ENCODE measurements at regions of chr18 and their contacts with region 1.

Region 1: DNA sequence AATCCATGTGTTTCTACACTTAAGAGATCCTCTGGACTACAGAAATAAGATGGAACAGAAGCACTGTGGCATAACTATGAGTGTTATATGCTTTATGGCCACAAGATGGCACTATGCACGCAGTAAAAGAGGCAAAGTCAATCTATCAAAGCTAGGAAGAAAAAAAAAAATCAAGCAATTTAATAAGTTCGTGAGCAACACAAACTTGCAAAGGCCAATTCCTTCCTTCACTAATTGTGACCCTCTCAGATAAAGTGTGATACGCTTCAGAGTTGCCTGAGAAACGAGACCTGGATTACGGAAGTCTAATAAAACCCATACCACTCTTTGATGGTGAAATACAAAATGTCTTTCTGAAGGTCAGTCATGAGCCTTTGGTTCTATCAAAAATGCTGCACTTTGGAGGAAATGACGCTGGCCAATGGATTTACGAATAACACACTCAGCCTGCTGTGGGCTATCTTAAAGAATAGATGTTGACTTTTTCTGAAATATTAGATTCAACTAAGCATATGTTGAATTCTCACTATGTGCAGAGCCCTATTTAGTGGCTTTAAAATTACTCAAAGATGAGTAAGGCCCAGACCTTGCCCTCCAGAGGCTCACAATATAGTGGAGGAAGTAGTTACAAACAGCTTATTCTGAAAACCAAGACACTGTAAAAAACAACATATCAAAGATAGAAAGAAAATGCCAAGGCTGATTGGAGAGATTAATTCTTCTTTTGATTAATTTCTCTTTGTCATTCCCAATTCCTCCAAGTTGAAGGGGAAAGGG is 35.5 kb upstream of the TTR start:
- DNase-seq: peak; percentile 82
- H3K4me3 ChIP-seq: no peak overlapping the region
- H3K27ac ChIP-seq: no peak overlapping the region
- H3K4me1 ChIP-seq: peaks cover 3% of the 10 kb centered on the region
- H3K27me3 ChIP-seq: no peaks in the 10 kb centered on the region
- CTCF ChIP-seq: peak; percentile 49 to 65
- POLR2A ChIP-seq: no peak

Region 2: GRCh38 chr18:30971338-30971956 is 584.7 kb before region 1 on chr18:
- CTCF ChIA-PET with region 1: no interaction called
- POLR2A ChIA-PET with region 1: no interaction called
- dilution Hi-C with region 1: no loop called
- intact Hi-C with region 1: loop called (anchors 5 kb)
- DNase-seq: peak; percentile 37
- H3K4me3 ChIP-seq: no peak overlapping the region
- H3K27ac ChIP-seq: no peak overlapping the region
- H3K4me1 ChIP-seq: no peaks in the 10 kb centered on the region
- H3K27me3 ChIP-seq: no peaks in the 10 kb centered on the region
- CTCF ChIP-seq: peak in 1 of 2 donors; percentile 31
- POLR2A ChIP-seq: no peak

Region 3: DNA sequence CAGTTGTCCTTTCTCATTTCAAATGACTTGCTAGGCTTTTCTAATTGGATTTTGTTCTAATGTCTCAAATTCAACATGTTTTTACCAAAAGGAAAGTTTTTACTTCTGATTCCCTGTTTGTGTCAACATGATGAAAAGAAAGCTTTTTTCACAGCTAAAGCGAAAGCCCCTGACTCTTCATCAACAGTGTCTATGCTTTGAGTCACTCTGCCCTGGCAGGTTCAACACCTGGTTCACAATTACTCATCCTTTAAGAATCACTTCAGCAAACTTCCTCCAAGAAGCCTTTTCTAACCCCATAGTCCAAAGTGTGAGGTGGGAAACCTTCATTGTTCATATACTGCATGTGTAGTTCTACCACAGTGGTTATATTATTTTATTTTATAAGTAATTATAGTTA is 65.8 kb before region 1 on chr18:
- CTCF ChIA-PET with region 1: no interaction called
- POLR2A ChIA-PET with region 1: no interaction called
- dilution Hi-C with region 1: no loop called
- intact Hi-C with region 1: no loop called
- DNase-seq: no peak
- H3K4me3 ChIP-seq: no peak overlapping the region
- H3K27ac ChIP-seq: no peak overlapping the region
- H3K4me1 ChIP-seq: no peaks in the 10 kb centered on the region
- H3K27me3 ChIP-seq: no peaks in the 10 kb centered on the region
- CTCF ChIP-seq: no peak
- POLR2A ChIP-seq: no peak

Region 4: GRCh38 chr18:31685097-31686082 is 129.2 kb after region 1 on chr18:
- CTCF ChIA-PET with region 1: interaction called, 10 read pairs
- POLR2A ChIA-PET with region 1: no interaction called
- dilution Hi-C with region 1: no loop called
- intact Hi-C with region 1: loop called (anchors 1 kb)
- DNase-seq: peak; percentile 83
- H3K4me3 ChIP-seq: peak overlapping the region; percentile 52 to 68 (median 59)
- H3K27ac ChIP-seq: peak overlapping the region; percentile 39
- H3K4me1 ChIP-seq: peaks cover 31% of the 10 kb centered on the region
- H3K27me3 ChIP-seq: no peaks in the 10 kb centered on the region
- CTCF ChIP-seq: peak; percentile 35 to 50
- POLR2A ChIP-seq: peak; percentile 48

Region 5: DNA sequence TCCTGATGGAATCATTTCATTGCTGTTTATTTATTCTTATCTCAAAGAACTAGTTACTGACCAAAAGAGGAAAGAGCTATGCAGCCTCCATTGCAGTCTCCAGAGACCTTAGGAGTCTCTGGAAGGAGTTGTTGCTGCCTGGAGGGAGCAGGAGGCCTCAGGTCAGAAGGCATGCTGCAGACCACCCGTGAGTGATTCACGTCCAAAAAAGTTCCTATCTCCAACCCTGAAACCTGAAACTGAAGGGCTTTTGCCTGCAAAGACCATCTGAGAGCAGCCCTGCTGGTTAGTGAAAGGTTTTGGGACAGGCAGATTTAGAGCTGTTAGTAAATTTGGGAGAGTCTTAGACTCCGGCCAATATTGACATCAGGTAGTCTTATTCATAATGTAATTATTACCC is 175.5 kb after region 1 on chr18:
- CTCF ChIA-PET with region 1: interaction called, 148 read pairs
- POLR2A ChIA-PET with region 1: no interaction called
- dilution Hi-C with region 1: no loop called
- intact Hi-C with region 1: no loop called
- DNase-seq: no peak
- H3K4me3 ChIP-seq: no peak overlapping the region
- H3K27ac ChIP-seq: no peak overlapping the region
- H3K4me1 ChIP-seq: no peaks in the 10 kb centered on the region
- H3K27me3 ChIP-seq: peaks cover 9 to 13% of the 10 kb centered on the region in 2 experiments
- CTCF ChIP-seq: no peak
- POLR2A ChIP-seq: no peak

Region 6: GRCh38 chr18:31819106-31819924 is 263.2 kb after region 1 on chr18:
- CTCF ChIA-PET with region 1: interaction called, 42 read pairs
- POLR2A ChIA-PET with region 1: no interaction called
- dilution Hi-C with region 1: no loop called
- intact Hi-C with region 1: loop called (anchors 1 kb)
- DNase-seq: peak; percentile 52
- H3K4me3 ChIP-seq: no peak overlapping the region
- H3K27ac ChIP-seq: no peak overlapping the region
- H3K4me1 ChIP-seq: no peaks in the 10 kb centered on the region
- H3K27me3 ChIP-seq: peaks cover 4 to 7% of the 10 kb centered on the region in 2 experiments
- CTCF ChIP-seq: peak; percentile 51 to 64
- POLR2A ChIP-seq: no peak

Region 7: GRCh38 chr18:32446780-32447179 is 890.6 kb after region 1 on chr18:
- CTCF ChIA-PET with region 1: no interaction called
- POLR2A ChIA-PET with region 1: no interaction called
- dilution Hi-C with region 1: no loop called
- intact Hi-C with region 1: no loop called
- DNase-seq: no peak
- H3K4me3 ChIP-seq: no peak overlapping the region
- H3K27ac ChIP-seq: no peak overlapping the region
- H3K4me1 ChIP-seq: no peaks in the 10 kb centered on the region
- H3K27me3 ChIP-seq: peaks cover 0 to 2% of the 10 kb centered on the region in 2 experiments
- CTCF ChIP-seq: no peak
- POLR2A ChIP-seq: no peak